Caco-2 (cell line): ENCODE measurements at regions of chr10 and their contacts with region 1.

Region 1: GRCh38 chr10:91127341-91128082 is 93.0 kb upstream of the PCGF5 start:
- DNase-seq: no peak
- H3K4me3 ChIP-seq: no peak overlapping the region
- H3K4me3 Mint-ChIP-seq: no peak overlapping the region
- H3K27ac Mint-ChIP-seq: no peak overlapping the region
- H3K4me1 ChIP-seq: no peaks in the 10 kb centered on the region
- H3K4me1 Mint-ChIP-seq: no peaks in the 10 kb centered on the region
- H3K27me3 ChIP-seq: no peaks in the 10 kb centered on the region
- H3K27me3 Mint-ChIP-seq: peaks cover 9% of the 10 kb centered on the region
- CTCF ChIP-seq: no peak

Region 2: GRCh38 chr10:91156196-91156595 is 28.7 kb after region 1 on chr10:
- CTCF ChIA-PET with region 1: no interaction called
- POLR2A ChIA-PET with region 1: no interaction called
- intact Hi-C with region 1: loop called (anchors 1 kb)
- DNase-seq: no peak
- H3K4me3 ChIP-seq: no peak overlapping the region
- H3K4me3 Mint-ChIP-seq: no peak overlapping the region
- H3K27ac Mint-ChIP-seq: no peak overlapping the region
- H3K4me1 ChIP-seq: no peaks in the 10 kb centered on the region
- H3K4me1 Mint-ChIP-seq: no peaks in the 10 kb centered on the region
- H3K27me3 ChIP-seq: peaks cover 5% of the 10 kb centered on the region
- H3K27me3 Mint-ChIP-seq: peaks cover 20% of the 10 kb centered on the region
- CTCF ChIP-seq: no peak

Region 3: DNA sequence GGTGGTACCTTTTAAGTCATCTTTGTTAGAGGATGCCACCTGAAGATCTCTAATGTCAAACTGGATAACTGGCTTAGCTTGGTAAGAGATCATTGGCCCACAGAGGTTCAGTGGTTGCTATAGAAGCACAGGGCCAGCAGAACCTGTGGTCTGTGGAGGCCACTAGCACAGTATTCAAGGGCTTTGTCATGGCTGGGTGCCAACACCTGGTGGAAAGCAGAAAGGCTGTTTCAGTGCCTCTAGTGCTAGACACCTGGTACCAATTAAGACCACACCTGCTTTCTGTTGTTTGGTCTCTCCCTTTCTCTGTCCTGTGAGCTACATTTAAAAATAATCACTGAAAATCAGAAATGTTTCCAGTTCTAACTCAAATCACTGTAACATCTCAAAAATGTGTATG is 82.9 kb after region 1 on chr10:
- CTCF ChIA-PET with region 1: no interaction called
- POLR2A ChIA-PET with region 1: no interaction called
- intact Hi-C with region 1: no loop called
- DNase-seq: no peak
- H3K4me3 ChIP-seq: no peak overlapping the region
- H3K4me3 Mint-ChIP-seq: no peak overlapping the region
- H3K27ac Mint-ChIP-seq: no peak overlapping the region
- H3K4me1 ChIP-seq: no peaks in the 10 kb centered on the region
- H3K4me1 Mint-ChIP-seq: no peaks in the 10 kb centered on the region
- H3K27me3 ChIP-seq: no peaks in the 10 kb centered on the region; the same call in 1 of the 2 replicates
- H3K27me3 Mint-ChIP-seq: peaks cover 15% of the 10 kb centered on the region
- CTCF ChIP-seq: no peak